ENCODE measurements at regions of chr2 and their contacts with region 1.

Region 1: DNA sequence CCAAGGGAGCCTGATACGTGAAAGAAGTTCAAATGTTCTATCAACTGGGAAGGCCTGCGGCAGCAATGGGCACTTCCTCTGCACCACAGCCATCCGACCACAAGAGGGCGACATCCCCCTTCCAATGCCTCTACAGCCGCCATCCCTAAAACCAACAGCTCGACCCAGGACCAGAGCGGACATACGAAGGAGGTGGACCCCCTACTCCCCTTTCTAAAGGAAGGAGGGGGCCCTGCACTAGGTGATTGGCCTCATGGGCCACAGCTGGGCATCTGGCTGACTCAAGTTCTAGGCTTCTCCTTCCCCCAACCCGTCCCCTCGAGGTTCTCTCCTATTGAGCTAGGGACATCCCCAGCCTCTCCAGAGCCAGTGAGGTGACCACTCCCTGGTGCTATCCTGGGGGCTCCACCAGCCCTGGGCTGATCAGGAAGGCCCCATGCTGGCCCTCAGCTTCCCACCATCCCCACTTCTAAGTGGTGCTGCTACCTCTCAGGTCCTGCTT is 217.2 kb downstream of the TNS1 start:
- DNase-seq: peak; percentile 72 to 83
- H3K4me3 ChIP-seq: no peak overlapping the region
- H3K27ac ChIP-seq: no peak overlapping the region
- H3K4me1 ChIP-seq: no peaks in the 10 kb centered on the region
- H3K27me3 ChIP-seq: no peaks in the 10 kb centered on the region
- CTCF ChIP-seq: peak; percentile 93 to 97 (median 96)
- POLR2A ChIP-seq: no peak

Region 2: DNA sequence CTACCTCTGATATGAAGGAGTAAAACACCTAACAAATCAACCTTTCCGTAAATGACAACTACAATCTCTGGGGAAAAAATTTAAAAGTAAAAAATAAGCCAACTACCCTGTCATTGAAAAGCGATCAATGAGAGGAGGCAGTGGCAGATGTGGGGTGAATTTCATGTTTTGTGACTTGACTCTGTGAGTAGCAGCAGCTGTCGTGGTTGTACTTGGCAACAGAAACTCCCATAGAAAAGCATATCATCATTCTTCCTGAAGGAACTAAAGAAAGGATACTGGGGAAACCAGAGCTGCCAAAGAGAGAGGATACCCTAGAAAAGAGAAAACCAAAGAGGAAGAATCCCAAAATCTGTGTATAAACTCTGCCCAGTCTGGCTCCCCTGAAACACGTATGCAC is 19.2 kb before region 1 on chr2:
- intact Hi-C with region 1: no loop called
- DNase-seq: no peak
- H3K4me3 ChIP-seq: no peak overlapping the region
- H3K27ac ChIP-seq: no peak overlapping the region
- H3K4me1 ChIP-seq: no peaks in the 10 kb centered on the region
- H3K27me3 ChIP-seq: no peaks in the 10 kb centered on the region
- CTCF ChIP-seq: no peak
- POLR2A ChIP-seq: no peak

Region 3: DNA sequence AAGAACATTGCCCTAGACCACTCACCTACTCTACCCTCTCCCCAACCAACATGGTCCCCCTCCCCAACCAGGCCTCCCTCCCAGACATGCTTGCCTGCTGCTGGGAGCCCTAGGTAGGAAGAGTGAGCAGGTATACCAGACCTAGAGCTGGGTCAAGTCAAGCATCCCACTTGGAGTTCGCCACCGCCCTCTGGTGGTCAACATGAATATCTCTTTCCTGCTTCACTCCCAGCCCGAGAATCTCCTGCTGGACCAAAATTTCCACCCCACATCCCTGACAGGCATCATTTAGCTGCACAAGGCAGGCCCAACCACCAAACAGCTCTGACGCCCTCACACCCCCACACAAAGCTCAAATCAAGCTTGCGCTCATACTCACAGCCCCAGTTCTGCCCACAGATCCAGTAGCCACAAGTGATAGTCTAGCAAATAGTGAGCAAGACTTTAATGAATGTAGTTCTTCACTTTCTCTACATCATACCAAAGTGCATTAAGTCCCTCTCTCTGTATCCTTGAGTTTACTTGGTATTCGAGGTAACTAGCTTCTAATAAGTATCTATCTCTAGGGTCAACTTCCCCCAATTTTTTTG is 101.2 kb after region 1 on chr2:
- intact Hi-C with region 1: loop called (anchors 5 kb)
- DNase-seq: peak in 1 of 2 donors; percentile 77
- H3K4me3 ChIP-seq: no peak overlapping the region
- H3K27ac ChIP-seq: peak overlapping the region in 1 of 2 donors; percentile 71
- H3K4me1 ChIP-seq: no peaks in the 10 kb centered on the region
- H3K27me3 ChIP-seq: no peaks in the 10 kb centered on the region
- CTCF ChIP-seq: peak; percentile 67 to 81 (median 79)
- POLR2A ChIP-seq: no peak

Region 4: GRCh38 chr2:217993817-217994463 is 208.3 kb after region 1 on chr2:
- intact Hi-C with region 1: loop called (anchors 5 kb)
- DNase-seq: no peak
- H3K4me3 ChIP-seq: peak overlapping the region in 1 of 3 donors; percentile 12
- H3K27ac ChIP-seq: peak overlapping the region; percentile 55 to 68
- H3K4me1 ChIP-seq: peaks cover 5 to 15% of the 10 kb centered on the region in 2 donors
- H3K27me3 ChIP-seq: no peaks in the 10 kb centered on the region
- CTCF ChIP-seq: peak; percentile 30 to 50 (median 49)
- POLR2A ChIP-seq: no peak

Region 5: DNA sequence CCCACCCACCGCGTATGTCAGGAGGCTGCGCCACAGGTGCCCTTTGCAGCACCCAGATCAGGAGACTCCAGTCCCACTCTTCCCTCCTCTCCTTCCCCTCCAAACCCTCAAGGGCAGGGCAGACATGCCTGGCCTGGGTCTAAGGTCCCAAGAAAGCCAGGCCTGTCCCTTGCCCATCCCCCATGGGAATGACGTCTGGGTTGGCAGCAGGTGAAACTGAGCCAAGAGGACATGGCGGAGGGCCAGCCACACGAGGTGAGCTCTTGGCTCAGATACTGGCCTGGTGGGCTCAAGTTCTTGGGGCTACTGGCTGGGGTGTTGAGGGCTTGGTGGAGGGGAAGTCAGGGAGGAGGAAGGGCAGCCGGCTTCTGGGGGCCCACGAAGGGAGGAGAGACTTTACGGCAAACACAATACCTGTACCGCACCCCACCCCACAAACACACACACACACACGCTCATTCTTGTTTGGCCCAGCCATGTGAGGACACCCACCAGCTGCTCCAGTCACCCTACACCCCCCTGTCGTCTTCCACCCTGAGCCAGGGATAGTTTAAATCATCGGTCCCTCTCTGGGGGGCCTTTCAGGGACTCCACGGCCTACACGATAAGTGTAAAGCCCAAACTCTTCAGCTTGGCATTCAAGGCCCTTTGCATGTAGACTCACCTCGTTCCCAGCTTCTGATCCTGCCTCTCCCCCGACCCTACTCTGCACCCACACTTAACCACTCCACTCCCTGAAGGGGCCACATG is 241.3 kb after region 1 on chr2:
- intact Hi-C with region 1: loop called (anchors 10 kb)
- DNase-seq: peak; percentile 89 to 92
- H3K4me3 ChIP-seq: no peak overlapping the region
- H3K27ac ChIP-seq: peak overlapping the region; percentile 61 to 79
- H3K4me1 ChIP-seq: peaks cover 0 to 41% of the 10 kb centered on the region in 2 donors
- H3K27me3 ChIP-seq: no peaks in the 10 kb centered on the region
- CTCF ChIP-seq: no peak
- POLR2A ChIP-seq: no peak